Heart left ventricle (tissue), 16 donors: ENCODE measurements at regions of chrX and their contacts with region 1.

Region 1: DNA sequence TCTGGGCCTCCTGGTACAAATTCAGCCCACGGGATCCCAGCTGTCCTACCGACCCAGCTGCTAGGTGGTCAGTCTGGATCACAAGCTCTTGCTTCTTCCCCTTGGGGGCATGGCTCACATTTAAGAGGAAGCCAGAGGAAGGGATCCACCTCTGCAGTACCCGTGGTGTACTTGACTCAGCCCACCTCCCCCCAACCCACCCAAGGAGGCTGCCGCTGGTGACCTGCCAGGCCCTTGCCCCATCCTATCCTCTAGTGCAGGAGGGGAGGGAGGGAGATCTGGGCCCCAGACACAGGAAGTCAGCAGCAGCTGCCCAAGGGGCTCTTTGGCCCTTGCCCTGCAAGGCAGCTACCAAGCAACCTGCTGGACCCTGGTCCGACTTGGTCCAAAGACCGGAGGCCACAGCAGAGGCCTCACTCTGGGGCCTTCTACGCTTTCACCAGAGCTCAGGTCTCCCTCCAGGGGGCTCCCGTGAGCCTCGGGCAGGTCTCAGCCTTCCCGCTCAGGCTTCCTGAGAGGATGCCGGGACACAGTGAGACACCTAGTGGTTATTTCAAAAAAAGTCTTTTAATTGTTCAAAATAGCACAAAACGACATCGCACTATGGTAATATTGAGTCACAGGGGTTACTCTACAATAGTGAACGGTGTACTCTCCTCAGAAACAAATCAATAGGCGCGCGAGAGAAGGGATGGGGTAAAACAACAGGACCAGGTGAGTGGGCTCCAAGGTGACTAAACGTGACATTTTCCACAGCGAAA is 2.7 kb upstream of the RENBP start:
- DNase-seq: peak; percentile 62 to 87 (median 72)
- ATAC-seq: peak; percentile 53 to 77 (median 68)
- H3K4me3 ChIP-seq: no peak overlapping the region
- H3K27ac ChIP-seq: peak overlapping the region; percentile 35 to 86 (median 67)
- H3K4me1 ChIP-seq: peaks cover 0 to 36% (median 8%) of the 10 kb centered on the region in 12 donors
- H3K27me3 ChIP-seq: peaks cover 0 to 15% (median 0%) of the 10 kb centered on the region in 9 donors
- CTCF ChIP-seq: peak; percentile 67 to 95 (median 78)
- POLR2A ChIP-seq: no peak

Region 2: DNA sequence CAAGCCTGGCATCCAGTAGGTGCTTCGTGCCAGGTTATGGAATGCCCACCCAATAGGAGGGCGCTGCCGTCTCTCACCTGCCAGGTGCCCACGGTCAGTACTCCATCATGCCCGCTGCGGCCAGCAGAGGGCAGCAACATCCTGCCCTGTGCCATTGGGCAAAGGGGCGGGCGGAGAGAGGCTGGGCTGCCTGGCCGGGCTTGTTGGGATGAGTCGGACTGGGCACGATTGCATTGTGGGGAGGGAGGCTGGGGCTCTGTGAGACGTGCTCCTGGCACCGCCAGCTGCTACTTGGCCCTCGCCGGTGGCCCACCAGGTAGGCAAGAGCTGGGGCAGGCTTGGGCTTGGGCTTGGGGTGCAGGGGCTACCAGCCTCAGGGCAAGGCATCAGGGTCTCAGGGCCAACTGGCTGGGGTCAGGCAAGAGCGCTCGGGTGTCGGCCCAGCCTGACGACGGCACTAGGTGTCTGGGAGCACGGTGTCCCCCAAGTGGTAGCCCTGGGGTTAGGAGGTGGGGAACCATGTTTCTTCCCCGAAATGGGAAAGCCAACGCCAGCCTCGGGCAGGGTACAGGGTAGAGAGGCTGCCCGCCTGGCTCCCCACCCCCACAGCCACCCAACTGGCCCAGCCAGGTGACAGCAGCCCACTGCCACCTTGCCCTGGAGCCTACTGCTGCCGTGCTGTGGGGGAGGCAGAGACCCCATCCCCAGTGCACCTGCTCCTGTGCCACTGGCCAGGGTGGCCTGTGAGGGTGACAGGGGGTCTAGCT is 183.0 kb before region 1 on chrX and contains the start of gene PLXNB3:
- intact Hi-C with region 1: loop called in 9 of 10 experiments (anchors 1 to 5 kb)
- DNase-seq: peak; percentile 66 to 88 (median 75)
- ATAC-seq: peak; percentile 52 to 89 (median 81)
- H3K4me3 ChIP-seq: peak within 1 kb of the TSS in 3 of 12 donors; percentile 3 to 21 (median 19)
- H3K27ac ChIP-seq: peak within 1 kb of the TSS in 7 of 12 donors; percentile 9 to 81 (median 28)
- H3K4me1 ChIP-seq: peaks cover 0 to 26% (median 5%) of the 10 kb centered on the region in 12 donors
- H3K27me3 ChIP-seq: peaks cover 0 to 4% (median 0%) of the 10 kb centered on the region in 9 donors
- CTCF ChIP-seq: peak; percentile 68 to 93 (median 78)
- POLR2A ChIP-seq: no peak
- total RNA-seq, gene PLXNB3: 1.6 to 8.6 (median 3.5) TPM

Region 3: GRCh38 chrX:154012336-154012991 is 65.3 kb after region 1 on chrX:
- intact Hi-C with region 1: no loop called
- DNase-seq: no peak
- ATAC-seq: no peak
- H3K4me3 ChIP-seq: no peak overlapping the region
- H3K27ac ChIP-seq: no peak overlapping the region
- H3K4me1 ChIP-seq: peaks cover 0 to 8% (median 0%) of the 10 kb centered on the region in 12 donors
- H3K27me3 ChIP-seq: peaks cover 0 to 38% (median 0%) of the 10 kb centered on the region in 9 donors
- CTCF ChIP-seq: no peak
- POLR2A ChIP-seq: no peak